ENCODE measurements at regions of chr22 and their contacts with region 1.

Region 1: DNA sequence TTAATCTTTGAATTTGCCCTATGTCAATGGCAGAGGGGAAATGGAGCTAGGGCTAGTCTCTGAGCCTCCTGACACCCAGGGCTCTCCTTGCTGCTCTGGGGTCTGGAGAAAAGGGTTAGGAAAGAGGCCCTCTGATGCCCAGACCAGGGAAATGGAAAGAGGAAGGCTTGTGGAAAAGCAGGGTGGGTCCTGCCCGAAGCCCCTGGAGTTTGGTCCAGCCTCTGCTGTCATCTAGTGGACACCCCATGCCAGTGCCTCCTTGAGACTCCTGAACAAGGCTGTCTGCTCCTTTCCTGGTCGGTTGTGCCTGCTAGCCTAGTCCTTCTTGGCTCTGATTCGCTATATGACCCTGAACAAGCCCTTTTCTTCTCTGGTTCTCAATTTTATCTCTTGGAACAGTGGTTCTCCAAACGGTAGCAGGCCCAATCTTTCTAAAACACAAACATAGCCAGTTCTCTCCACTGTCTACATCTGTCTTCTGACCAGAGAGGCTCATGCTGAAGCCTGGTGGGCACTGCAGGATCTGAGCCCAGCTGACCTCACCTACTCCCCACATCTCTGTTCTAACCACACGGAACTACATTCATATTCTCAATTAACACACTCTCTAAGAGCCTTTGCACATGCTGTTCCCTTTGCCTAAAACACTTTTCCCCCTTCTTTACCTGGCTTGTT is 8.8 kb upstream of the PLA2G3 start:
- DNase-seq: peak; percentile 48 to 76 (median 61)
- ATAC-seq: peak; percentile 98
- H3K4me3 ChIP-seq: no peak overlapping the region
- H3K27ac ChIP-seq: no peak overlapping the region
- H3K4me1 ChIP-seq: no peaks in the 10 kb centered on the region
- H3K27me3 ChIP-seq: no peaks in the 10 kb centered on the region
- CTCF ChIP-seq: peak; percentile 82 to 94 (median 92)
- EP300 ChIP-seq: no peak
- POLR2A ChIP-seq: no peak
- RAD21 ChIP-seq: peak; percentile 89 to 93

Region 2: GRCh38 chr22:30245985-30246901 is 902.8 kb before region 1 on chr22 and contains the start of gene LIF:
- CTCF ChIA-PET with region 1: no interaction called
- POLR2A ChIA-PET with region 1: no interaction called
- in situ Hi-C with region 1: no loop called
- intact Hi-C with region 1: no loop called
- DNase-seq: peak; percentile 18 to 65 (median 43)
- ATAC-seq: peak; percentile 60
- H3K4me3 ChIP-seq: peak within 1 kb of the TSS; percentile 22
- H3K27ac ChIP-seq: no peak within 1 kb of the TSS
- H3K4me1 ChIP-seq: peaks cover 0 to 28% of the 10 kb centered on the region in 2 experiments; a peak in 2 of 5 replicates
- H3K27me3 ChIP-seq: peaks cover 0 to 39% of the 10 kb centered on the region in 2 experiments; a peak in 2 of 5 replicates
- CTCF ChIP-seq: peak in 1 of 3 experiments; percentile 26; a peak in 1 of 6 replicates
- EP300 ChIP-seq: no peak
- POLR2A ChIP-seq: no peak
- RAD21 ChIP-seq: no peak
- polyA plus RNA-seq, gene LIF: not detected

Region 3: GRCh38 chr22:30763815-30764686 is 385.0 kb before region 1 on chr22:
- CTCF ChIA-PET with region 1: interaction called, 3 read pairs
- POLR2A ChIA-PET with region 1: no interaction called
- in situ Hi-C with region 1: no loop called
- intact Hi-C with region 1: loop called (anchors 5 kb)
- DNase-seq: peak; percentile 49 to 75 (median 57)
- ATAC-seq: peak; percentile 80
- H3K4me3 ChIP-seq: no peak overlapping the region
- H3K27ac ChIP-seq: no peak overlapping the region
- H3K4me1 ChIP-seq: no peaks in the 10 kb centered on the region; a peak in 1 of 5 replicates
- H3K27me3 ChIP-seq: peaks cover 0 to 9% of the 10 kb centered on the region in 2 experiments; a peak in 1 of 5 replicates
- CTCF ChIP-seq: peak; percentile 67 to 80 (median 75)
- EP300 ChIP-seq: no peak
- POLR2A ChIP-seq: no peak
- RAD21 ChIP-seq: peak; percentile 67 to 82

Region 4: DNA sequence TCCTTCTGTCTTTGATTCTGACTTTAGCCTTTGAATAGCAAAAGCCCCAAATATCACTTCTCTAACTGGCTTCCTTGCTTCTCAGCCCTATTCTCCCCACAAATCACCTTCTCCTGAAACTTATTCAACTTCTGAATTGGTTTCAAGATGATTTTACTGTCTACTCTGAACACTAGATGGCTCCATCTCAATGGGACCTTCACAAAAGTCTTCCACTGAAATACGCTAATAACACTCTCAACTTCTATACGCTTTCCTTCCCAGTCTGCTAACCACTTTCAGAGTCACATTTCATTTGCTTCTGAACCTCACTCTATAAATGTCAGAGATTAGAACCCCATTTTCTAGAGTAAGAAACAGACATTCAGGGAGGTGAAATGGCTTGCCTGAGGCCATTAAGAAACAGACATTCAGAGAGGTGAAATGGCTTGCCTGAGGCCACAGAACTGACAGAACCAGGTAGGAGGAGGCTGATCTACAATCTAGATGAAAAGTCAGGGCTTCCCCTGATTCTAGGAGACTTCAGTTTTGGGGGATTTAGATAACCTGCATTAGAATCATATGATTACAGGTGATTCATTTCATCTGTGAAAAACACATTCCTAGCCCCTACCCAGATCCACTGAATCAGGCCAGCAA is 201.2 kb before region 1 on chr22:
- CTCF ChIA-PET with region 1: interaction called, 7 read pairs
- POLR2A ChIA-PET with region 1: interaction called, 4 read pairs
- in situ Hi-C with region 1: loop called (anchors 10 kb)
- intact Hi-C with region 1: no loop called
- DNase-seq: peak in 3 of 4 experiments; percentile 15 to 19 (median 18)
- ATAC-seq: no peak
- H3K4me3 ChIP-seq: no peak overlapping the region
- H3K27ac ChIP-seq: no peak overlapping the region
- H3K4me1 ChIP-seq: no peaks in the 10 kb centered on the region
- H3K27me3 ChIP-seq: no peaks in the 10 kb centered on the region
- CTCF ChIP-seq: peak; percentile 22 to 62 (median 26); a peak in 3 of 6 replicates
- EP300 ChIP-seq: no peak
- POLR2A ChIP-seq: no peak
- RAD21 ChIP-seq: peak; percentile 51 to 63

Region 5: GRCh38 chr22:31075961-31076360 is 73.1 kb before region 1 on chr22:
- CTCF ChIA-PET with region 1: no interaction called
- POLR2A ChIA-PET with region 1: no interaction called
- in situ Hi-C with region 1: no loop called
- intact Hi-C with region 1: no loop called
- DNase-seq: no peak
- ATAC-seq: no peak
- H3K4me3 ChIP-seq: no peak overlapping the region
- H3K27ac ChIP-seq: no peak overlapping the region
- H3K4me1 ChIP-seq: peaks cover 3 to 6% of the 10 kb centered on the region in 2 experiments; a peak in 3 of 5 replicates
- H3K27me3 ChIP-seq: no peaks in the 10 kb centered on the region
- CTCF ChIP-seq: no peak
- EP300 ChIP-seq: no peak
- POLR2A ChIP-seq: no peak
- RAD21 ChIP-seq: no peak

Region 6: DNA sequence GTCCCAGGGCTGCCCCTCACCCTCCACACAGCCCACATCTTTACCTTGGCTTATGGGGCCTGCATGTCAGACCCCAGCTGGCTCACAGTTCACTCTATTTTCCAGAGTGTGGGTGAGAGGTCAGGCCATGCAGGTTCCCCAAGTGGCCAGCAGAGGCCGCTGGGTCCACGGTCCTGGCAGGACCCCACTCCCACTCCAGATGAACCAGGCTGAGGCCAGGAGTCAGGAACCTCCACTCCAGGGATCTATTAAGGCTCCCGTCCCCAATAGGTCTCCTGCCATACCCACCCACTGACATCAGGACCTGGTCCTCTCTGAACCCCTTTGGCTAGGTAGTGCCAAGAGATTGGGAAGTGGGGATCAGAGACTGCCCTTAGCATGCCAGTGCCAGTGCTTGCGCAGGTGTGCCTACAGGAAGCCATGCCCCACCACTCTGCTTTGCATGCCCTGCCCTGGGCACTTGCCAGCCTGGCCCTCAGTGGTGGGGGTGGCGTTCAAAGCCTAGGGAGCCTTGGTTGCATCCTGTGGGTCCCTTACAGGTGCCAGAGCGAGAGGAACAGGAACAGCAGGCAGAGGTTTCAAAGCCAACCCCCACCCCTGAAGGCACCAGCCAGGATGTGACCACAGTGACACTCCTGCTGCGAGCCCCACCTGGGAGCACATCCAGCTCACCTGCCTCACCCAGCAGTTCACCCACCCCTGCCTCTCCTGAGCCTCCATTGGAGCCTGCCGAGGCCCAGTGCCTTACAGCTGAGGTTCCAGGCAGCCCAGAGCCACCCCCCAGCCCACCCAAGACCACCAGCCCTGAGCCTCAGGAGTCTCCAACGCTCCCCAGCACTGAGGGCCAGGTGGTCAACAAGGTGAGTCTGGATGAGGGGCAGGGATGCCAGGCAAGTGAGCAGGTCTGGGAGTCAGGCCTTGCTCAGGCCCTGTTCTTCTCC is 59.7 kb before region 1 on chr22:
- CTCF ChIA-PET with region 1: interaction called, 12 read pairs
- POLR2A ChIA-PET with region 1: no interaction called
- in situ Hi-C with region 1: no loop called
- intact Hi-C with region 1: loop called (anchors 1 kb)
- DNase-seq: peak; percentile 59 to 64 (median 61)
- ATAC-seq: peak; percentile 60
- H3K4me3 ChIP-seq: no peak overlapping the region
- H3K27ac ChIP-seq: no peak overlapping the region
- H3K4me1 ChIP-seq: peaks cover 19 to 55% of the 10 kb centered on the region in 2 experiments; a peak in 4 of 5 replicates
- H3K27me3 ChIP-seq: no peaks in the 10 kb centered on the region
- CTCF ChIP-seq: peak; percentile 74 to 84 (median 81)
- EP300 ChIP-seq: no peak
- POLR2A ChIP-seq: no peak
- RAD21 ChIP-seq: peak; percentile 72 to 83

Region 7: DNA sequence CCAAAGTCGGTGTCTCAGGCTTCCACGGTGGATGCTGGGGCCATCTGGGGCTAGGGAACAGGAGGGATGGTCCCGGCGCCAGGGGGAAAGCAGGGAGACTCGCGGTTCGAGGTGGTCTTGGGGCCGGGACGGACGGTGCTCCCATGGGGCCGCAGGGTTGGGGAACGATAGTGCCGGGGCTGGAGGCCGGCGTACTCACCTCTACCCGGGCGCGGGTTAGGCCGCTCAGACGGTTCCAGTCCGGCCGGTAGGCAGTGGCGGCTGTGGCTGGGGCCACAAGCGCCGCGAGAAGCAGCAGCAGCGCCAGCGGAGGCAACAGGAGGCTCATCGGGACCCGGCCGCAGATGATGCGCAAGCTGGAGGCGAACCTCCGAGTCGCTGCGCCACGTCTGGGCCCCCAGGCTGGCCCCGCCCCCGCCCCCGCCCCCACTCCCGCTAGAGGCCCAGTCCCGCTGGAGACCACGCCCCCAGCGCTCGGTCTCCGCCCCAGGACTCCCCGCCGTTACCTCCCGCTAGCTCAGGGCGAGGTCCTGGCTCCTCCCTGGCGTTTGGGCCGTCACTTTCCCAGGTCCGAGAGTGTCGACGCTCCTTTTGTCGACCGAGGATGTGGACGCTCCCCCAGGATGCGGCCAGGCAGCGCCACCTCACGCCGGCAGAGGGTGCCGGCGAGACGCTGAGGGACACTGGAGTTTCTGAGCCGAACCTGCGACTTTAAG is 41.8 kb before region 1 on chr22 and contains the start of gene SELENOM:
- CTCF ChIA-PET with region 1: interaction called, 18 read pairs
- POLR2A ChIA-PET with region 1: interaction called, 3 read pairs
- in situ Hi-C with region 1: loop called (anchors 5 kb)
- intact Hi-C with region 1: loop called (anchors 2 kb)
- DNase-seq: peak; percentile 93 to 96 (median 94)
- ATAC-seq: peak; percentile 100
- H3K4me3 ChIP-seq: peak within 1 kb of the TSS; percentile 52
- H3K27ac ChIP-seq: peak within 1 kb of the TSS; percentile 68
- H3K4me1 ChIP-seq: peaks cover 2 to 17% of the 10 kb centered on the region in 2 experiments; a peak in 4 of 5 replicates
- H3K27me3 ChIP-seq: no peaks in the 10 kb centered on the region
- CTCF ChIP-seq: peak; percentile 90 to 92 (median 90)
- EP300 ChIP-seq: no peak
- POLR2A ChIP-seq: no peak
- RAD21 ChIP-seq: peak; percentile 88 to 89
- polyA plus RNA-seq, gene SELENOM: 1.2 to 2.9 TPM

Region 8: DNA sequence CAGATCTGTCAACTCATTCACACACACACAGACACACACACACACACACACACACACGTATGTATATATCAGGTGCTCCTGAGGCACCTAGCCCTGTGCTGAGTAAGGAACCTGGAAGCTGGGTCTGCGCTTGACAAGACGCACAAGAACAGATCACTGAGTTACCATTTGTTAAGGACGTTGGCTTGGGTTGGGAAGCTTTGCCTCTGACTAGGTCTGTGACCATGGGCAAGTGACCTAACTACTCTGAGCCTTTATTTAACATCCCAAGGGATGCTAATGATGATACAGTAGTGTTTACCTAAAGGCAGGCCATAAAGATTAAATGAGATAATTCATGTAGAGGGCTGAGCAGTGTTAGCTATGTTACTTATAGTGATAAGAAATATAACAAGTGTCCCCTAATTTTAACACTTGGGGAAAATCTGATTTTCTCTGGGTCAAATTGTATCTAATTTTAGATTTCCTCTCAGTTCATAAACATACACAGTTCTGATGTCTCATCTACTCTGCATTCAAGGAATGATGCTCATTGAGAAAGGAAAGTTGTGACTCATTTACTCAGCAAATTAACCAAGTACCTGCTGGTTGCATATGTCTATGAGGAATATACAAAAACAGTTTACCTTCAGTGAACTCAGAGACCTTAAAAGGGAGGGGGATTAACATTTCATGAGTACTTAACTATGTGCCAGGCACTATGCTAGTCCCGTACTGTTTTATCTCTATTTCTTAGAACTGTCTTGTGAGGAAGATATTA is 24.5 kb after region 1 on chr22:
- CTCF ChIA-PET with region 1: no interaction called
- POLR2A ChIA-PET with region 1: no interaction called
- in situ Hi-C with region 1: no loop called
- intact Hi-C with region 1: no loop called
- DNase-seq: no peak
- ATAC-seq: no peak
- H3K4me3 ChIP-seq: no peak overlapping the region
- H3K27ac ChIP-seq: no peak overlapping the region
- H3K4me1 ChIP-seq: no peaks in the 10 kb centered on the region; a peak in 1 of 5 replicates
- H3K27me3 ChIP-seq: no peaks in the 10 kb centered on the region
- CTCF ChIP-seq: no peak
- EP300 ChIP-seq: no peak
- POLR2A ChIP-seq: no peak
- RAD21 ChIP-seq: no peak

Region 9: DNA sequence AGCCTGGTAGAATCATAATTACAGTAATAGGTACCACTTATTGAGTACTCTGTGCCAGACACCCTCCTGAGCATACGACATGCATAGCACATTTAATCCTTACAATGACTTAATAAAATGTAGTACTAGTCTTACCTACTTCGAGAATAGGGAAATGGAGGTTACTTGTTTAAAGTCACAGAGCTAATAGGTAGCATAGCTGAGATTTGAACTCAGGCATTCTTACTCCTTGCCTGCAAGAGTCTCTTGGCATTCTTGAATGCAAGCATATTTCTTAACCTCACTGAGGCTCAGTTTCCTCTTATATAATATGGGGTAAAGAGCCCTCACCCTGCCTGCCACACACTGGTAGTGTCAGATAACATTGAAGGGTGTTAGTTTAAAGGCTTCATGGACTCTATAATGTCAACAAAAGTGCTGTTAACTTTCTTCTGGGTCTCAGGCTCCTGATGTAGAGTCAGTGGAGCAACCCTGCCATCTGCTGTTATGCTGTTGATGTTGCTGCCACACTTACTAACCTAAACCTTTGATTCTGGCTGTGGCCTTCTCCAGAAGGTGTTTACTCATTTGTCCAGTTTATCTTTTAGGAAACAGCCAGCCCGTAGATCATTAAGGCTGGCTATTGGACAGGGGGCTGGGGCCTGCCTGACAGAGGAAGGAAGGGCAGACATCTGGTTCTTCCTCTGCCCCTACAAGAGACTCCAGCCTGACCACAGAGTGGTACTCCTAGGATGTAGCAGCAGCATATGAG is 82.0 kb after region 1 on chr22:
- CTCF ChIA-PET with region 1: no interaction called
- POLR2A ChIA-PET with region 1: no interaction called
- in situ Hi-C with region 1: no loop called
- intact Hi-C with region 1: loop called (anchors 2 kb)
- DNase-seq: peak in 3 of 4 experiments; percentile 24 to 61 (median 43)
- ATAC-seq: peak; percentile 85
- H3K4me3 ChIP-seq: no peak overlapping the region
- H3K27ac ChIP-seq: no peak overlapping the region
- H3K4me1 ChIP-seq: peaks cover 0 to 34% of the 10 kb centered on the region in 2 experiments; a peak in 3 of 5 replicates
- H3K27me3 ChIP-seq: no peaks in the 10 kb centered on the region
- CTCF ChIP-seq: peak; percentile 60 to 83 (median 73)
- EP300 ChIP-seq: no peak
- POLR2A ChIP-seq: no peak
- RAD21 ChIP-seq: peak; percentile 78 to 82

Measured in K562 (cell line).